ENCODE measurements at regions of chr1 and their contacts with region 1.

Region 1: GRCh38 chr1:50968158-50968820 is 1.8 kb upstream of the CDKN2C start:
- DNase-seq: peak; percentile 87 to 88
- H3K4me3 ChIP-seq: peak overlapping the region; percentile 79
- H3K4me3 Mint-ChIP-seq: peak overlapping the region; percentile 81
- H3K27ac Mint-ChIP-seq: no peak overlapping the region
- H3K4me1 ChIP-seq: no peaks in the 10 kb centered on the region
- H3K4me1 Mint-ChIP-seq: no peaks in the 10 kb centered on the region
- H3K27me3 ChIP-seq: no peaks in the 10 kb centered on the region
- H3K27me3 Mint-ChIP-seq: no peaks in the 10 kb centered on the region
- CTCF ChIP-seq: peak; percentile 2 to 22

Region 2: GRCh38 chr1:50873458-50874187 is 94.7 kb before region 1 on chr1:
- CTCF ChIA-PET with region 1: no interaction called
- POLR2A ChIA-PET with region 1: no interaction called
- intact Hi-C with region 1: loop called (anchors 2 kb)
- DNase-seq: peak; percentile 53 to 60
- H3K4me3 ChIP-seq: no peak overlapping the region
- H3K4me3 Mint-ChIP-seq: no peak overlapping the region
- H3K27ac Mint-ChIP-seq: no peak overlapping the region
- H3K4me1 ChIP-seq: no peaks in the 10 kb centered on the region
- H3K4me1 Mint-ChIP-seq: no peaks in the 10 kb centered on the region
- H3K27me3 ChIP-seq: no peaks in the 10 kb centered on the region
- H3K27me3 Mint-ChIP-seq: no peaks in the 10 kb centered on the region
- CTCF ChIP-seq: peak; percentile 38 to 45

Region 3: GRCh38 chr1:50929376-50929958 is 38.8 kb before region 1 on chr1:
- CTCF ChIA-PET with region 1: interaction called, 9 read pairs
- POLR2A ChIA-PET with region 1: no interaction called
- intact Hi-C with region 1: loop called (anchors 5 kb)
- DNase-seq: no peak
- H3K4me3 ChIP-seq: no peak overlapping the region
- H3K4me3 Mint-ChIP-seq: no peak overlapping the region
- H3K27ac Mint-ChIP-seq: no peak overlapping the region
- H3K4me1 ChIP-seq: no peaks in the 10 kb centered on the region
- H3K4me1 Mint-ChIP-seq: no peaks in the 10 kb centered on the region
- H3K27me3 ChIP-seq: no peaks in the 10 kb centered on the region
- H3K27me3 Mint-ChIP-seq: no peaks in the 10 kb centered on the region
- CTCF ChIP-seq: peak; percentile 32 to 38